A549 (cell line): ENCODE measurements at regions of chr20 and their contacts with region 1.

Region 1: DNA sequence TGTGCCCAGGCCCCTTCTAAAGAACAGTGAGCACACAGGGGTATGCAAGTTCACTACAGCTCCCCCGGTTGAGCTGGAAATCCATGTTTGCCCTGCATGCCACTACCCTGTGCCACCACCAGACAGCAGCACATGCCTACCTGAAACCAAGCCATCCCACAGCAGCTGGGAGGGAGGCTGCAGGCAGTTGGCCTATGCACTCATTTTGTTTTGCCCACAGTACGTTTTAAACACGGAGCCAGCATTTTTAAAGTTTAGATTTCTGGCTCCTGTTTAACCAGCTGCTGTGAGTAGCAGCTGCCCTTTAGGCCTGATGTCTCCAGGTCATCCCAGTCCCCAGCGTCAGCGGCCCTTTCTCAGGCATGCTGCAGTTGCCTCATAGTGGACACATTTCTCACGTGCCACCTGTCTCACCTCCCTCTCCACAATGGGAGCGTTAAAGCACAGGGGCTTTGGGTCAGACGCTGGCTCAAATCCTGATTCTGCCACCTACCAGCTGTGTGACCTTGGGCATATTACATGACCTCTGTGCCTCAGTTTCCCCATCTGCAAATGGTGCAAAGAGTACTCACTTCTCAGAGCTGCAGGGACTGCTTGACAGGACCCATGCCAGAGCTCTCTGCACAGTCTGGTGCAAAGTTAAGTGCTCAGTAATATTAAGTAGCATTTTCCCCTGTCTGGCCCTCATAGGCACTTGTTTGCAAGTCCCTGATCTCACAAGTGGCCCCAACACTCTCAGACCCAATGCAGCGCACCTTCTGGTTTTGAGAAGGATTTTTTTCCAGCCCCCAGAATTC is 8.1 kb upstream of the UBE2V1 start:
- DNase-seq: peak; percentile 79 to 82
- ATAC-seq: peak; percentile 89 to 91
- H3K4me3 ChIP-seq: no peak overlapping the region
- H3K27ac ChIP-seq: peak overlapping the region in 1 of 2 experiments; percentile 45; a peak in 3 of 6 replicates
- H3K4me1 ChIP-seq: peaks cover 11% of the 10 kb centered on the region
- CTCF ChIP-seq: peak; percentile 80
- EP300 ChIP-seq: no peak
- POLR2A ChIP-seq: no peak
- RAD21 ChIP-seq: peak; percentile 96 to 99

Region 2: GRCh38 chr20:50065325-50065615 is 55.8 kb before region 1 on chr20:
- CTCF ChIA-PET with region 1: no interaction called
- POLR2A ChIA-PET with region 1: no interaction called
- DNase-seq: no peak
- ATAC-seq: no peak
- H3K4me3 ChIP-seq: no peak overlapping the region
- H3K27ac ChIP-seq: peak overlapping the region in 1 of 2 experiments; percentile 46; a peak in 2 of 6 replicates
- H3K4me1 ChIP-seq: peaks cover 13% of the 10 kb centered on the region; the same call in 2 of the 3 replicates
- CTCF ChIP-seq: no peak
- EP300 ChIP-seq: no peak
- POLR2A ChIP-seq: no peak
- RAD21 ChIP-seq: no peak

Region 3: DNA sequence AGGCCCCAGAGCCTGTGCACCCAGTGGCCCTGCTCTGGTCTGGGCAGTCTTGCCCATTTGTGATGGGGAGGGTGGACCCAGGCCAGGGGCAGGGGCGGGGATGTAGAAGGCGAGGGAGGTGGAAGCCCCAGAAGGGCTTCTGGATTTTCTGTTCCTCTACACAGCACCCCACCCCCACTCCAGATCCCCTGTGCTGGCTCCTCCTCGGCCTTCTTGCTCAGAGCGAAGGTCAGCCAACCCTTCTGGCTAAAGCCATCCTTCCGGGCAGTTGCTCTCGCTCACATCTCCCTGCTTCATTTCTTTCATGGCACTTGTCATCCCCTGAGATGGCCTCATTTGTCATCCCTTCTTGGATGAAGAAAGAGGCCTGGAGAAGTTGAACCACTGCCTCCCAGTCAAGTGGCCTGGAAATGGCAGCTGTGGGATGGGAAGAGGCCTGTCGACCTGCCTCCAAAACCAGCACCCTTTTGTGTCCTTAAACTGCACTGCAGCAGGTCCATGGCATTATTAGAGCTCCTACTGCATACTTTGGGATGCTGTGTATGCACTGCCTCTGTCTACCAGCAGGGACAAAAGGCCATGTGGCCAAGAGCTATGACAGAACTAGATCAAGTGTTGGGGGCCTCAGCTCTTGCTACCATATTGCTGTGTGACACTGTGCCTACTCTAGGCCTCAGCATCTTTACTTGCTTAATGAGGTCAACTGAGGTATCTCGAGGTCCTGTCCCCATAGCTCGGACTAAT is 12.6 kb after region 1 on chr20:
- CTCF ChIA-PET with region 1: interaction called, 123 read pairs
- POLR2A ChIA-PET with region 1: interaction called, 4 read pairs
- DNase-seq: no peak
- ATAC-seq: peak; percentile 50 to 52; a peak in 3 of 6 replicates
- H3K4me3 ChIP-seq: no peak overlapping the region
- H3K27ac ChIP-seq: peak overlapping the region in 1 of 2 experiments; percentile 40; a peak in 1 of 6 replicates
- H3K4me1 ChIP-seq: peaks cover 51% of the 10 kb centered on the region
- CTCF ChIP-seq: no peak
- EP300 ChIP-seq: no peak
- POLR2A ChIP-seq: no peak
- RAD21 ChIP-seq: no peak

Region 4: GRCh38 chr20:50146732-50147662 is 25.9 kb after region 1 on chr20:
- CTCF ChIA-PET with region 1: interaction called, 161 read pairs
- POLR2A ChIA-PET with region 1: interaction called, 6 read pairs
- DNase-seq: no peak
- ATAC-seq: no peak
- H3K4me3 ChIP-seq: no peak overlapping the region
- H3K27ac ChIP-seq: peak overlapping the region in 1 of 2 experiments; percentile 95; a peak in 4 of 6 replicates
- H3K4me1 ChIP-seq: peaks cover 79% of the 10 kb centered on the region
- CTCF ChIP-seq: no peak
- EP300 ChIP-seq: no peak
- POLR2A ChIP-seq: no peak
- RAD21 ChIP-seq: no peak